ENCODE measurements at regions of chr6 and their contacts with region 1.

Region 1: GRCh38 chr6:63598049-63599036 is 26.1 kb downstream of the LOC128125822 start:
- DNase-seq: no peak
- H3K4me3 ChIP-seq: peak overlapping the region; percentile 70
- H3K27ac ChIP-seq: no peak overlapping the region
- H3K27me3 ChIP-seq: no peaks in the 10 kb centered on the region
- CTCF ChIP-seq: peak; percentile 94

Region 2: DNA sequence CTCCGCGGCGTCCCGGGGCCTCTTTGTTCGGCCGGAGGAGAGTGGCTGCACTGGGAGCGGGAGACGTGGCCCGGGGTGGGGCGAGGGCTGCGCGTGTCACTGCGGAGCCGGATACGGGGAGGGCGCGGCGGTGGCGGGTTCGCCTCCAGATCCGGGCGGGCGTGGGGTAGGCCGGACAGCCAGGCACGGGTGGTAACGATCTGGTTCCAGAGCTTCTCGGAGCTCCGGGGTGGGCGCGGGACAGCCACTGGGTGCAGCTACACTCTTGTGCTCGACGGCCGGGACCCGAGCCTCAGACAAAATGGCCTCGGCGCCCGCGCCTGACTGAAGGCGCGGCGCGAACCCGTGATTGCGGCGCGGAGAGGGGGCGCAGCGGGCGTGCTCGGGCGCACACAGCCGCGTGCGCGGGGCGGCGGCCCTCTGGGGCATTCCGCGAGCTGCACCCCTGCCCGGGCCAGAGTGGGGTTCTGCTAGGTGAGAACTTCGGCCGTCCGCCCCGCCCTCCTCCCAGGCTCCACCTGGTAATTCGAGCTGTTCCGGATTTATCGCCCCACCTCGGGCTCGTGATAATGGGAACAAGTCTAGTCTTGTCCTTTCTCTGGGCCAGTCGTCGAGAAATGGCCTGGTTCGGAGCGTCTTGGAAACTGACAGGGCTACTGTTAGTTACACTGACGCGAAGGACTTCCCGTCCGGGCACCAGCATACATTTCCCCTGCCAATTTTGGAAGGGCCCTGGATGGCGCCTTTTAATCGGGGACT is 25.0 kb before region 1 on chr6:
- CTCF ChIA-PET with region 1: interaction called, 17 read pairs
- POLR2A ChIA-PET with region 1: interaction called, 5 read pairs
- DNase-seq: no peak
- H3K4me3 ChIP-seq: peak overlapping the region; percentile 86
- H3K27ac ChIP-seq: peak overlapping the region; percentile 92
- H3K27me3 ChIP-seq: no peaks in the 10 kb centered on the region
- CTCF ChIP-seq: no peak

Region 3: DNA sequence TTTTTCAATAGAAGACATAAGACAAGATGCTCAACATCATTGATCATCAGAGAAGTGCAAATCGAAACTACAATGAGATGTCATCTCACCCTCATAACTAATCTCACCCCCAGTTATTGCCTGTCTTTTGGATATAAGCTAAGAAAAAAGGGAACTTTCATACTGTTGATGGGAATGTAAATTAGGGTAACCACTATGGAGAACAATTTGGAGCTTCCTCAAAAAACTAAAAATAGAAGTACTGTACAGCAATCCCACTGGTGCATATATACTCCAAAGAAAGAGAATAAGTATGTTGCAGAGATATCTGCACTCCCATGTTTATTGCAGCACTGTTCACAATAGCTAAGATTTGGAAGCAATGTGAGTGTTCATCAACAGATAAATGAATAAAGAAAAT is 10.9 kb after region 1 on chr6:
- CTCF ChIA-PET with region 1: interaction called, 64 read pairs
- POLR2A ChIA-PET with region 1: no interaction called
- DNase-seq: no peak
- H3K4me3 ChIP-seq: no peak overlapping the region
- H3K27ac ChIP-seq: no peak overlapping the region
- H3K27me3 ChIP-seq: peaks cover 2% of the 10 kb centered on the region
- CTCF ChIP-seq: no peak

Region 4: DNA sequence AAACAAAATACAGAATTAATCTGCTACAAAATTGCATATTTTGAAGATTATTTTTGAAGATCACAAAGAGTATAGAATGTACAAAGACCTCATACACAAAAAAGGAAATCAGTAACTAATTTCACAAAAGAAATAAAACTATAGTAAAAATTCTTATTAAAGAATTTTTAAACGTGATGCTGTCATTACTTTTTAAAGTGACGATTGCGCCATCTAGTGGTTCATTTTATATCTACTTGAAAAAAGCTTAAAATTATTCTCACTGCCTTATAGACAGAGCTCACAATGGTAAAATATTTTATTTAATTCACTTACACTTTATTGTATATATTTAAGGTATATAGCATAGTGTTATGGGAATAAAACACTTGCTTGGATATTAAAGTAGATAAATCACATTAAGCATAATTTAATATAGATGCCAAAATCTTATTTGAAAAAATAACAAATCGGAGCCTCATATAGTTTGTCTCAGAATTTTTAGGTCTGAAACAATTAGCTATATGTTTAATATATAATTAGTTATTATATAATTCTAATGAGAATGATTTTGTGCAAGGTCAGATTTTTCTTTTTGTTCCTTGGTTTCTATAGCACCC is 166.1 kb after region 1 on chr6:
- CTCF ChIA-PET with region 1: interaction called, 67 read pairs
- POLR2A ChIA-PET with region 1: no interaction called
- DNase-seq: peak; percentile 15
- H3K4me3 ChIP-seq: no peak overlapping the region
- H3K27ac ChIP-seq: no peak overlapping the region
- H3K27me3 ChIP-seq: no peaks in the 10 kb centered on the region
- CTCF ChIP-seq: peak; percentile 43

Region 5: DNA sequence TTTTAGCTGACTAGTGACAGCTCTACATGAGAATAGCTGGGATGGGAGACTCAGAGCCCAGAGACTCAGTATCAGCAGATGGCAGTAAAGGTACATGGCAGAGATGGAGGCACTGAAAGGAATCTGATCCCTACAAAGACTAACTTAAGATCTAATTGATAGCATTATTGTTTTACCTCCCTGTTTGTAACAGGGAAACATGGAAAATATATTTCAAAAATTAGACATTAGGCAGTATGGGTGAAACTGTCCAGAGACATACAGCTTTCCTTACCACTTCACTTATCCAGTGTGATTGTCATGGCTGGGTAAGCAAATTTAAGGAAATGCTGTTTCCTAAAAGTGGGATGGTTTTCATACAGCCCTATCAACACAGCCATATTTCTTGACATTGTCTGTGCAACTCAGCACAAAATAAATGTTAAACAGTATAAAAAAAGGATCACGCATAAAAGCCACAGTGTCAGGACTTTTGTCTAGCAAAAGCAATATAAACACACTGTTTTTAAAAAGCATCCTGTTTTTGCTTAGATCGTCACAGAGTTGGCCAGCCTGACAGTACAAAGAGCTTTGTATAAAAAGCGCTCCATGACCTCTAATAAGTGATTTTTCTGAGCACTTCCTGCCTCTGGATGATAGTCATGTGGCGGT is 414.1 kb after region 1 on chr6:
- CTCF ChIA-PET with region 1: no interaction called
- POLR2A ChIA-PET with region 1: no interaction called
- DNase-seq: peak; percentile 55
- H3K4me3 ChIP-seq: no peak overlapping the region
- H3K27ac ChIP-seq: no peak overlapping the region
- H3K27me3 ChIP-seq: no peaks in the 10 kb centered on the region
- CTCF ChIP-seq: peak; percentile 99

Measured in AG04450 (cell line).